OCI-LY7 (cell line): ENCODE measurements at regions of chrX and their contacts with region 1.

Region 1: DNA sequence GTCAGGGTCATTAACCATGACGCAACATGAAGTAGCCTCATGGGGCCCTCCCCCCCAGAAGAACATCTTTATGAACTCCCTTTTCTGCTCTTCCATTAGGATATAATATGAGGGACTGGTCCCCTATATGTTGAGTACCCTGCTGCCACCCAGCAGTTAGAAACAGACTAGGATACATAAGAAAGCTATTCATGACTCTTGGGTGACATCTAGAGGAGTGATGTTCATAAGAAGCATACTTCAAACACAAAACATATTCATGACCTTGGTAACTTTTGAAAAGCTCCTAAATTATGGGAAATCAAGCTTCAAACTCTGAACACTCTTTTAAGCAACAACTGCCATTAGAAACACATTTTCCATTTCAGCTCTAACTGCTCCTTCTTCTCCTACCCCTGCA is 155.2 kb upstream of the SPIN4 start:
- DNase-seq: peak; percentile 37
- H3K4me3 ChIP-seq: no peak overlapping the region
- H3K27ac ChIP-seq: no peak overlapping the region
- H3K4me1 ChIP-seq: no peaks in the 10 kb centered on the region
- CTCF ChIP-seq: peak; percentile 55; the same call in 1 of the 2 replicates

Region 2: DNA sequence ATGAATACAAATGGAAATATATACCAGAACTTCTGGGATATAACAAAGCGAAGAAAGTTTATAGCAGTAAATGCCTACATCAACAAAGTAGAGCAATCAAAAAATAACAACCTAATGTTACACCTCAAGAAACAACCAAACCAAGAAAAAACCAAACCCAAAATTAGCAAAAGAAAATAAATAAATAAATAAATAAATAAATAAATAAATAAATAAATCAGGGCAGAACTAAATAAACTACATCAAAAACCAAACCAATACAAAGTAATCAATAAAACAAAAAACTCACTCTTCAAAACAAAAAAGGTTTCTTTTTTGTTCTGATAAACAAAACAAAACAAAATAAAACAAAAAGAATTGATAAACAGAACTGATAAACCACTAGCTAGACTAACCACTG is 66.7 kb before region 1 on chrX:
- CTCF ChIA-PET with region 1: no interaction called
- POLR2A ChIA-PET with region 1: no interaction called
- intact Hi-C with region 1: loop called (anchors 2 kb)
- DNase-seq: no peak
- H3K4me3 ChIP-seq: no peak overlapping the region
- H3K27ac ChIP-seq: no peak overlapping the region
- H3K4me1 ChIP-seq: no peaks in the 10 kb centered on the region
- CTCF ChIP-seq: no peak

Region 3: GRCh38 chrX:64176876-64177275 is 670.6 kb after region 1 on chrX:
- CTCF ChIA-PET with region 1: no interaction called
- POLR2A ChIA-PET with region 1: no interaction called
- intact Hi-C with region 1: no loop called
- DNase-seq: no peak
- H3K4me3 ChIP-seq: no peak overlapping the region
- H3K27ac ChIP-seq: no peak overlapping the region
- H3K4me1 ChIP-seq: no peaks in the 10 kb centered on the region
- CTCF ChIP-seq: no peak